CD14-positive monocyte (primary cell): ENCODE measurements at regions of chr16 and their contacts with region 1.

Region 1: GRCh38 chr16:68085259-68086071 is at the start of gene NFATC3:
- DNase-seq: peak; percentile 95 to 98 (median 97)
- H3K4me3 ChIP-seq: peak within 1 kb of the TSS; percentile 75 to 98 (median 87)
- H3K4me3 Mint-ChIP-seq: peak within 1 kb of the TSS; percentile 90
- H3K27ac ChIP-seq: peak within 1 kb of the TSS; percentile 91 to 92
- H3K27ac Mint-ChIP-seq: peak within 1 kb of the TSS; percentile 86 to 97 (median 93)
- H3K4me1 ChIP-seq: peaks cover 45 to 69% of the 10 kb centered on the region in 2 donors
- H3K4me1 Mint-ChIP-seq: peaks cover 70% of the 10 kb centered on the region
- H3K27me3 ChIP-seq: no peaks in the 10 kb centered on the region
- H3K27me3 Mint-ChIP-seq: peaks cover 0 to 2% (median 0%) of the 10 kb centered on the region in 3 donors
- CTCF ChIP-seq: no peak
- polyA plus RNA-seq, gene NFATC3: 14.3 to 21.8 (median 15.8) TPM

Region 2: GRCh38 chr16:66521951-66522771 is 1563.3 kb before region 1 on chr16:
- intact Hi-C with region 1: loop called in 1 of 2 experiments (anchors 10 kb)
- DNase-seq: peak; percentile 84 to 96 (median 95)
- H3K4me3 ChIP-seq: peak overlapping the region in 1 of 3 experiments; percentile 54
- H3K4me3 Mint-ChIP-seq: peak overlapping the region; percentile 9 to 21
- H3K27ac ChIP-seq: peak overlapping the region; percentile 99
- H3K27ac Mint-ChIP-seq: peak overlapping the region; percentile 99 to 100 (median 100)
- H3K4me1 ChIP-seq: peaks cover 100% of the 10 kb centered on the region in 2 donors
- H3K4me1 Mint-ChIP-seq: peaks cover 100% of the 10 kb centered on the region
- H3K27me3 ChIP-seq: no peaks in the 10 kb centered on the region
- H3K27me3 Mint-ChIP-seq: peaks cover 0 to 2% (median 2%) of the 10 kb centered on the region in 3 donors
- CTCF ChIP-seq: no peak

Region 3: GRCh38 chr16:67530013-67530939 is 555.2 kb before region 1 on chr16:
- intact Hi-C with region 1: loop called in 1 of 2 experiments (anchors 10 kb)
- DNase-seq: peak; percentile 68 to 81 (median 78)
- H3K4me3 ChIP-seq: peak overlapping the region; percentile 58 to 96 (median 88)
- H3K4me3 Mint-ChIP-seq: peak overlapping the region; percentile 94 to 100
- H3K27ac ChIP-seq: peak overlapping the region; percentile 95
- H3K27ac Mint-ChIP-seq: peak overlapping the region; percentile 96 to 98 (median 96)
- H3K4me1 ChIP-seq: peaks cover 40 to 67% of the 10 kb centered on the region in 2 donors
- H3K4me1 Mint-ChIP-seq: peaks cover 55% of the 10 kb centered on the region
- H3K27me3 ChIP-seq: peaks cover 0 to 1% of the 10 kb centered on the region in 2 donors
- H3K27me3 Mint-ChIP-seq: peaks cover 7 to 24% (median 16%) of the 10 kb centered on the region in 3 donors
- CTCF ChIP-seq: no peak

Region 4: DNA sequence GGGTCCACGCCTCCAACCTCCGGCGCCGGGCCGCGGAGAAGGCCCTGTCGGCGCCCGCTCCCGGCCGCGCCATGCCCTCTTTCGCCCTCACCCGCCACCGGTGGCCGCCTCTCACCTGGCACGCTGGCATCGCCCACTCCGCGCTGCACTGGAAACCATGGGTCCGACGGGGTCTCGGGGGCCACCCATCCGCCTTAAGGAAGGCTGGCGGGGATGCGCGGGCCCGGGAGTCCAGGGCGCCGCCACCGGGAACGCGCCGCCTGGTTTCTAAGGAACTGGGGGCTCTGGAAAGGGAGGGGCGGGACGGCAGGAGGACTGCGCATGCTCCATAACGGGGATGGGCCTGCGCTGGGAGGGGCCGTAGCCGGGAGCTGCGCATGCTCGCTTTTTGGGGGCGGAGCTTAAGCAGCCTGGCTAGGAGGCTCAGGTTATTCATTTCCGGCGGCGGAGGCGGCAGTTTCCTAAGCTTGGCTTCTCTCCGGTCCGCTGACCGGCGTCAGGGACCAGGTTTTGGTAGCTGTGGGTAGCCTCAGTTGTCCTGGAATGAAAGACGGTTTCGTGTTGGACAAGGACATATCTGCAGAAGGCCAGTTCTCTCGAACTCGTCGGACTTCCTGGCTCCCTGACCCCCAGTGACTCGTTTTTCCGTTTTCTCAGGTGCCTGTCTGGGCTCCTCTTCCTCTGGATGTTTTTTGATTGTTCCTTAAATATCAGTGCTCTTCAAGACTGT is 366.3 kb before region 1 on chr16 and contains the start of gene GFOD2:
- intact Hi-C with region 1: loop called in 1 of 2 experiments (anchors 5 kb)
- DNase-seq: peak; percentile 94 to 96 (median 94)
- H3K4me3 ChIP-seq: peak within 1 kb of the TSS; percentile 65 to 98 (median 79)
- H3K4me3 Mint-ChIP-seq: peak within 1 kb of the TSS; percentile 93 to 96
- H3K27ac ChIP-seq: peak within 1 kb of the TSS; percentile 77 to 96
- H3K27ac Mint-ChIP-seq: peak within 1 kb of the TSS; percentile 91 to 97 (median 94)
- H3K4me1 ChIP-seq: peaks cover 17 to 29% of the 10 kb centered on the region in 2 donors
- H3K4me1 Mint-ChIP-seq: peaks cover 33% of the 10 kb centered on the region
- H3K27me3 ChIP-seq: no peaks in the 10 kb centered on the region
- H3K27me3 Mint-ChIP-seq: peaks cover 0 to 2% (median 0%) of the 10 kb centered on the region in 3 donors
- CTCF ChIP-seq: no peak
- polyA plus RNA-seq, gene GFOD2: 3.7 to 9.4 (median 3.8) TPM

Region 5: DNA sequence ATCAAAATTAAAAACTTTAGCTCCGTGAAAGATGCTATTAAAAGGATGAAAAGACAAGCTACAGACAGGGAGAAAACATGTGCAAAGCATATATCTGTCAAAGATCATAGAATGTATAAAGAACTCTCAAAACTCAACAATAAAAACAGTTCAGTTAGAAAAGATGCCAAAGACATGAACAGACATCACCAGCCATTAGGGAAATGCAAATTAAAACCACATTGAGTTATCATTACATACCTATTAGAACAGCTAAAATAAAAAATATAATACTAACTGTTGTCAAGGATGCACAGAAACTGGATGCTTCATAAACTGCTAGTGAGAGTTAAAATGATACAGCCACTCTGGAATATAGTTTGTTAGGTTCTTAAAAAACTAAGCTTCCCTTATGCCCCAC is 58.5 kb after region 1 on chr16:
- intact Hi-C with region 1: no loop called
- DNase-seq: no peak
- H3K4me3 ChIP-seq: no peak overlapping the region
- H3K4me3 Mint-ChIP-seq: no peak overlapping the region
- H3K27ac ChIP-seq: no peak overlapping the region
- H3K27ac Mint-ChIP-seq: peak overlapping the region in 1 of 7 donors; percentile 11
- H3K4me1 ChIP-seq: no peaks in the 10 kb centered on the region
- H3K4me1 Mint-ChIP-seq: peaks cover 5% of the 10 kb centered on the region
- H3K27me3 ChIP-seq: no peaks in the 10 kb centered on the region
- H3K27me3 Mint-ChIP-seq: no peaks in the 10 kb centered on the region
- CTCF ChIP-seq: no peak

Region 6: GRCh38 chr16:68237243-68238028 is 152.0 kb after region 1 on chr16:
- intact Hi-C with region 1: loop called (anchors 5 to 10 kb)
- DNase-seq: peak; percentile 78 to 86 (median 82)
- H3K4me3 ChIP-seq: peak overlapping the region; percentile 46 to 85 (median 70)
- H3K4me3 Mint-ChIP-seq: peak overlapping the region; percentile 97 to 99
- H3K27ac ChIP-seq: peak overlapping the region; percentile 28 to 67
- H3K27ac Mint-ChIP-seq: peak overlapping the region; percentile 78 to 91 (median 90)
- H3K4me1 ChIP-seq: peaks cover 25 to 49% of the 10 kb centered on the region in 2 donors
- H3K4me1 Mint-ChIP-seq: peaks cover 28% of the 10 kb centered on the region
- H3K27me3 ChIP-seq: peaks cover 9 to 33% of the 10 kb centered on the region in 2 donors
- H3K27me3 Mint-ChIP-seq: peaks cover 28 to 42% (median 33%) of the 10 kb centered on the region in 3 donors
- CTCF ChIP-seq: no peak

Region 7: GRCh38 chr16:68244903-68245853 is 159.7 kb after region 1 on chr16 and contains the start of gene PLA2G15:
- intact Hi-C with region 1: loop called in 1 of 2 experiments (anchors 10 kb)
- DNase-seq: peak; percentile 79 to 92 (median 88)
- H3K4me3 ChIP-seq: peak within 1 kb of the TSS; percentile 69 to 89 (median 86)
- H3K4me3 Mint-ChIP-seq: peak within 1 kb of the TSS; percentile 97 to 98
- H3K27ac ChIP-seq: peak within 1 kb of the TSS; percentile 61 to 86
- H3K27ac Mint-ChIP-seq: peak within 1 kb of the TSS; percentile 60 to 92 (median 86)
- H3K4me1 ChIP-seq: peaks cover 39 to 47% of the 10 kb centered on the region in 2 donors
- H3K4me1 Mint-ChIP-seq: peaks cover 49% of the 10 kb centered on the region
- H3K27me3 ChIP-seq: no peaks in the 10 kb centered on the region
- H3K27me3 Mint-ChIP-seq: peaks cover 0 to 5% (median 0%) of the 10 kb centered on the region in 3 donors
- CTCF ChIP-seq: no peak
- polyA plus RNA-seq, gene PLA2G15: 27.8 to 34.8 (median 29.5) TPM